ENCODE measurements at regions of chr11 and their contacts with region 1.

Region 1: DNA sequence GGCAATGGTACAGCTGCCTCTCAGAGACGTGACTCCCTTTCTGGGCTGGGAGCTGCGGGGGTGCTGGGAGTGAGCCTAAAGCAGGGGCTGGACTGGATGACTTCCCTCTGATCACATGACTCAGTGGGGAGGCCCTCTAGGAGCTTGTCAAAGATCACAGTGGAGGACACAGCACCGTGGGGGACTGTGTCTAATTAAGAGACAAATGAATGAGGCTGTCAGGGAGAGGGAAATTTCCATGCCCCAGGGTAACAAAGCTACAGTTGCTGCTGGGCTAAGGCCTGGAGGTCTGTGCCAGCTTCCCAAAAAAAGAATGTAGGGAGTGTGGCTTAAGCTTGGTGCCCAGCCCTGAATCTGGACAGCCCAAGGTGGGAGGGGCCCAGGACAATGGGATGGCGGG is 262.8 kb upstream of the PLET1 start:
- DNase-seq: peak; percentile 96
- H3K4me3 ChIP-seq: no peak overlapping the region
- H3K27ac ChIP-seq: peak overlapping the region; percentile 17
- H3K4me1 ChIP-seq: peaks cover 49% of the 10 kb centered on the region
- H3K27me3 ChIP-seq: no peaks in the 10 kb centered on the region
- CTCF ChIP-seq: no peak

Region 2: DNA sequence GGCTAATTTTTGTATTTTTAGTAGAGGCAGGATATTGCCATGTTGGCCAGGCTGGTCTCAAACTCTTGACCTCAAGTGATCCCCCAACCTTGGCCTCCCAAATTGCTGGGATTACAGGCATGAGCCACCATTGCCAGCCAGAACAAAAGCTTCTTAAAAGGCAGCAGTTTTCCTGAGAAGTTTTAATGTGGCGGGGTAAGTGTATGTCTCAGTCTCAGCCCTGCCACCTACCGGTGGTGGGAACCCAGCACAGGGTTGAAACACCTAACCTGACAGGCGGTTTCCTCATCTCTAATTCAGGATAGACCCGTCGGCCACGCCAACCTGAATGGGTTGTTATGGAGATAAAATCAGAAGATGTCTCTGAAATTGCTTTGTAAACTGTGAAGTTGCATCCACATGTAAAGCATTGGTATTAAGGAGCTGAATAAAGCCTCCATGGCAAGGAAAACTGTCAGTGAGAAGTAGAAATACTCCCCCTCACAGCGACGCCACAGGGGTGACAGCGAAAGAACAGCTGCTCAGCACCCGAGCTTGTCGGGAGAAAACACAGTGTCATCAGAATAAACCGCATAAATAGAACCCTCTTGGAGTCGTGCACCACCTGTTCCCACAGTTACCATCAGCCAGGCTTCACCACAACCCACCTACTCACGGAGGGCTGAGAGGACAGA is 271.8 kb after region 1 on chr11:
- CTCF ChIA-PET with region 1: interaction called, 11 read pairs
- POLR2A ChIA-PET with region 1: no interaction called
- intact Hi-C with region 1: no loop called
- DNase-seq: peak; percentile 81
- H3K4me3 ChIP-seq: no peak overlapping the region
- H3K27ac ChIP-seq: no peak overlapping the region
- H3K4me1 ChIP-seq: no peaks in the 10 kb centered on the region
- H3K27me3 ChIP-seq: no peaks in the 10 kb centered on the region
- CTCF ChIP-seq: peak; percentile 81

Region 3: DNA sequence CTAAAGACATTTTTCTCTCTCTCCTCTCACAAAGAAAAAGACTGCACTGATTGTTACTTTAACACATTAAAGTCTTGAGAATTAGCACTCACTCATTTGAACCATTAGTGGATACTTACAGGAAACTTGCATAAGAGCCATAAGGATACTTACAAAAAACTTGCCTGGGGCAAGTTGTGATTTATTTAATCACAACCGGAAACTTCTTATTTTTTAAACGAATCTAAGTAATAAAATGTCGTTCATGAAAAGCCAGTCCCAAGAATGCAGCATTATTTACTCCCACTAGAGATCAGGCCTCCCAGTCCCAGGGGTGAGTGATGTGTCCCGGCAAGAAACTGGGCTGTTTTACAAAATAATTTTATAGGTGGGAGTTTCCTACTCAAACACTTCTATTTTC is 731.6 kb after region 1 on chr11:
- CTCF ChIA-PET with region 1: interaction called, 15 read pairs
- POLR2A ChIA-PET with region 1: no interaction called
- intact Hi-C with region 1: no loop called
- DNase-seq: peak; percentile 95
- H3K4me3 ChIP-seq: no peak overlapping the region
- H3K27ac ChIP-seq: peak overlapping the region; percentile 13
- H3K4me1 ChIP-seq: peaks cover 30% of the 10 kb centered on the region
- H3K27me3 ChIP-seq: no peaks in the 10 kb centered on the region
- CTCF ChIP-seq: no peak

Measured in A673 (cell line).